ENCODE measurements at regions of chr13 and their contacts with region 1.

Region 1: DNA sequence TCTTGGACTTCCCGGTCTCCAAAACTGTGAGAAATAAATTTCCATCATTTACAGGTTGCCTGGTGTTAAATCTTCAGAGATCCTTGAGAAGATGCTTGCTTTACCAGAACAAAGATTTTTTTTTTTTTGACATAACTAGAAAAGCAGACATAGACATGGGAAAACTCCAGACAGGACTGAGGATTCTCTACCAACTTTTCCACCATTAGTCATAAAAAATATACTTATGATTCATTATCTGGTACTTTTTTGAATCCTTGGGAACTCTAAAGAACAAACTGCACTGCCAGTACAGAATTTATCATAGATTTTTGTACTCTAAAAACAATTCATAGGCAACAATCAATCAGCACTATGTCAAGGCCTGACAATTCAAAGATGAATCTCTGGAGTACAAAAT is 487.6 kb downstream of the EFNB2 start:
- DNase-seq: no peak

Region 2: GRCh38 chr13:105316731-105317130 is 731.1 kb before region 1 on chr13:
- intact Hi-C with region 1: no loop called
- DNase-seq: no peak

Region 3: DNA sequence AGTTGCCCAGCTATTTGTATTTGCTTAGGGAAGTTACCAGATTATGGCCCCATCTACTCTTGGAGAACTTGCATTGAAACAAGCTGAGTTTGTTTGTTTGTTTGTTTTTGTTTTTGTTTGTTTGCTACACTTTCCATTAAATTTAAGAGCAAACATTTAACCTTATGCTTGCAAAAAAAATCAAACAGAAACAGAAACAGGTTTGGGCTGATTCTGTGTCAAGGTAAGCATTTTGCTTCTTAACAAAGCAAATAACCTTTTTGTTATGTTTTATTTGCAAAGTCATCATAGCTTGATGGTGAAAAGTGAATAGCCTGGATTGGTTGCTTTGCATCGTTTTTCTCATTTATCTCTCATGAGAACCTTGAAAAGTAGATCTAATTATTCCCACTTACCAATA is 44.2 kb before region 1 on chr13:
- intact Hi-C with region 1: loop called in 1 of 2 experiments (anchors 2 kb)
- DNase-seq: no peak